AG04450 (cell line): ENCODE measurements at regions of chr12 and their contacts with region 1.

Region 1: DNA sequence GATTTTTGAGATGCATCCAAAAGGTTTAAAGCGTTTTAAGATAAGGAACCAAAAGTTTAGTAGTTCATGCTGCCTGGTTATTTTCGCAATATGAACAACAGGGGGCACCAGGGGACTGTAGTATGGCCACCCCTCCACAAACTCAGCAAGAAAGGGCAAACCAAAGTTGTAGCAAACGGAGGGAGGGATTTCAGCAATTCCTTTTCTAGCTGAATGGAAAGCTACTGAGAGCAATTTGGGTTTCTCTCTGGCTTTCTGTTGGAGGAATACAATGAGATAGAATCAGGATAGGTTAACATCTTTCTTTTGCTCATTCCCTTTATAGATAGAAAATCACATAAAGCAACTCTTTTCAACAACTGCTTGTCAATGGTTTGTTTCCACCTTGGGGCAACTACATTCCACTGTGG is 62.5 kb downstream of the DRAM1 start:
- DNase-seq: peak; percentile 63
- H3K4me3 ChIP-seq: no peak overlapping the region
- H3K27ac ChIP-seq: no peak overlapping the region
- H3K27me3 ChIP-seq: no peaks in the 10 kb centered on the region
- CTCF ChIP-seq: peak; percentile 89

Region 2: DNA sequence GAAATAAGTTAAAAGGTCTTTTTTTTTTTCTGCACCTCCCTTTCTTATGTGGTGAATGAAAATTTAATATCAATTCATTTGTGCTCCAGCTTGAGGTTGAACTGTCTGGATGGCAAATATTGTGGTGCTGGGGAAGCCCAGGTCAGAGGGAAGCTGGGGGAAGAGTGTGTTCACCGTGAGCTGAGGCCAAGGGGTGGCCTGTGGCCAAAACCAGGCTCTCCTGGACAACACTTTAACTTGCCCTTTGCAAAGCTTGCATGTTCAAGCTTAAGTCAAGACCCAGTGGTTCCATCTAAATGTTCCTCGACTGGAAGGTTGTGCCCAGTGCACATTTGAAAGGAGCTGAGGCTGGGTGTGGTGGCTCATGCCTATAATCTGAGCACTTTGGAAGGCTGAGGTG is 33.6 kb before region 1 on chr12:
- CTCF ChIA-PET with region 1: no interaction called
- POLR2A ChIA-PET with region 1: no interaction called
- DNase-seq: no peak
- H3K4me3 ChIP-seq: no peak overlapping the region
- H3K27ac ChIP-seq: no peak overlapping the region
- H3K27me3 ChIP-seq: no peaks in the 10 kb centered on the region
- CTCF ChIP-seq: no peak

Region 3: DNA sequence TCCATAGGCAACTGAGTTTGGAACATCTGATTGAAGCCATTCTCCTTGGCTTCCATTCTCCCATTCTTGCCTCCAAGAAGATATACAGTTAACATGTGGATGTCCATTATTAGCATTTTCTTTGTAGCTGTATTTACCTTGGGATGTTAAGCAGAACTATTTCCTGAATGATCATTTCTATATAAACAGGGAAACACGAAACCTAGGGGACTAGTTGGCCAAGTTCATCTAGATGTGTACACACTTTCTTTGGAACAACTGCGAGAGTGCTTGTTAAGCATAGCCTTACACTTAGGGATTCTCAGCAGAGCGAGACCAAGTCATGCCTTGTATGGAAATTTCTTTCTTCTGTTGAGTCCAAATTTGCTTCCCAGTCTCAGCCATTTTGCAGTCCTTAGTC is 20.4 kb before region 1 on chr12:
- CTCF ChIA-PET with region 1: interaction called, 19 read pairs
- POLR2A ChIA-PET with region 1: interaction called, 3 read pairs
- DNase-seq: no peak
- H3K4me3 ChIP-seq: no peak overlapping the region
- H3K27ac ChIP-seq: no peak overlapping the region
- H3K27me3 ChIP-seq: no peaks in the 10 kb centered on the region
- CTCF ChIP-seq: no peak

Region 4: GRCh38 chr12:102095675-102096263 is 155.9 kb after region 1 on chr12:
- CTCF ChIA-PET with region 1: interaction called, 12 read pairs
- POLR2A ChIA-PET with region 1: no interaction called
- DNase-seq: no peak
- H3K4me3 ChIP-seq: no peak overlapping the region
- H3K27ac ChIP-seq: no peak overlapping the region
- H3K27me3 ChIP-seq: no peaks in the 10 kb centered on the region
- CTCF ChIP-seq: peak; percentile 39

Region 5: GRCh38 chr12:102702447-102703114 is 762.7 kb after region 1 on chr12:
- CTCF ChIA-PET with region 1: interaction called, 62 read pairs
- POLR2A ChIA-PET with region 1: no interaction called
- DNase-seq: peak; percentile 27
- H3K4me3 ChIP-seq: no peak overlapping the region
- H3K27ac ChIP-seq: no peak overlapping the region
- H3K27me3 ChIP-seq: no peaks in the 10 kb centered on the region
- CTCF ChIP-seq: peak; percentile 69

Region 6: DNA sequence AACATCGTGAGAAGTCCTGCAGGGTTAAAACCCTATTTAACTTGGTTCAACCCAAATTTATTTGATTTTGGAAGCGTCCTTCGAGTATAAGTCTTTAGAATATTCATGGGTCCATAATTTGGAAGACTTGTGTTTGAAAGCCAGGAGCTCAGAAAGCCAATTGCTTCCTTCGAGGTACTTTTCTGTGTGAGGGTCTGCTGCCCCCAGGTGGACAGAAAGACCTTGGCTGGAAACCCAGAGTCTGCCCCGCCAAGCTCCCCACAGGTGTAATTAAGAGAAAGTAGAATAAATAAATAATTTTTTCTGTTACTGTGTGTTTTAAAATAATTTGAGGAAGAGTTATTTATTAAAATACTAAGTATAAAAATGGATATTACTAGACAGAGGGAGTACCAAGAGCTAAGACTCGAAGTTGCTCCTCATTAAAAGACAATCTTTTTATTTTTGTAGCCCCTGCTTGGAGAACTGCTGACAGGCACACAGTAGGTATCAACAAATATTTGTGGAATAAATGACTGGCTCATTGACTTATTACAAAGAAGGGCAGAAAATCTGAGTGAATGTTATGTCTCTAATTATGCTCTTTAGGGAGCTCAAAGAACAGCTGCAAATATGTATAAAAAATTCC is 871.4 kb after region 1 on chr12:
- CTCF ChIA-PET with region 1: interaction called, 11 read pairs
- POLR2A ChIA-PET with region 1: no interaction called
- DNase-seq: no peak
- H3K4me3 ChIP-seq: no peak overlapping the region
- H3K27ac ChIP-seq: no peak overlapping the region
- H3K27me3 ChIP-seq: no peaks in the 10 kb centered on the region
- CTCF ChIP-seq: peak; percentile 34; the same call in 1 of the 2 replicates